GM12878 (cell line): ENCODE measurements at regions of chr9 and their contacts with region 1.

Region 1: DNA sequence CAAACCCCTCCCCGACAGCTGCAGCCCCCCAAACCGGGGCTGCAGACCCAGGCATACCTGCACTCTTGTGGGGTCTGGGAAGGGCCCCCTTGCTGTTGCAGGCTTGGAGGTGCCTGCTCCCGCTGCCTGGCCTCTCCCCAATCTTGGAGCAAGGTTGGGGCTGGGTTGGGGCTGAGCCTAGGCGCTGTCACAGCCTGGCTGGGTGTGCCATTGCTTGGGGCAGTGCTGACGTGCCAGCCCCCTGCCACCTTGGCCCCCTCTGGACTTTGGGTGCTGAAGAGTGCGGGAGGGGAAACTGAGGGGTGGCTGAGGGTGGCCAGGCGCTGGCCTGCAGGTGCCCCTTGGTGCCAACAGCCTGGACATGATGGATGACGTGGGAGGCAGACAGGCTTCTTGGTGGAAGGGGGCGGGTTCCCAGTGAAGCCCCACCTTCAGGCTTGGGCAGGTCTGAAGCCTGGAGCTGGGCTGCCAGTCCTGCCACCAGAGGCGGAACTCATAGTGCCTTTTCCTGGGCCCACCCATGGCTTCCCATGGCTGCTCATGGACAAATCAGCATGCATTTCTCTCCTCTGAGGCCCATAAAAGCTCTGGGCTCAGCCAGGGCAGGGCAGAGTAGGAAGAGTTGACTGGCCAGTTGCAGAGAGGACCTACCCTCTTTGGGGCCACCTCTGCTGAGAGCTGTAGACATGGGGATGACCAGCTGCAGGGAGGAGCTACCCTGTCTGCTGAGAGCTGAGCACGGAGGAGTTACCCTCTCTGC is 19.1 kb downstream of the TMEM38B start:
- DNase-seq: no peak
- ATAC-seq: no peak
- H3K4me3 ChIP-seq: no peak overlapping the region
- H3K27ac ChIP-seq: no peak overlapping the region
- H3K4me1 ChIP-seq: no peaks in the 10 kb centered on the region
- H3K27me3 ChIP-seq: no peaks in the 10 kb centered on the region
- CTCF ChIP-seq: no peak
- EP300 ChIP-seq: no peak
- POLR2A ChIP-seq: no peak
- RAD21 ChIP-seq: no peak

Region 2: DNA sequence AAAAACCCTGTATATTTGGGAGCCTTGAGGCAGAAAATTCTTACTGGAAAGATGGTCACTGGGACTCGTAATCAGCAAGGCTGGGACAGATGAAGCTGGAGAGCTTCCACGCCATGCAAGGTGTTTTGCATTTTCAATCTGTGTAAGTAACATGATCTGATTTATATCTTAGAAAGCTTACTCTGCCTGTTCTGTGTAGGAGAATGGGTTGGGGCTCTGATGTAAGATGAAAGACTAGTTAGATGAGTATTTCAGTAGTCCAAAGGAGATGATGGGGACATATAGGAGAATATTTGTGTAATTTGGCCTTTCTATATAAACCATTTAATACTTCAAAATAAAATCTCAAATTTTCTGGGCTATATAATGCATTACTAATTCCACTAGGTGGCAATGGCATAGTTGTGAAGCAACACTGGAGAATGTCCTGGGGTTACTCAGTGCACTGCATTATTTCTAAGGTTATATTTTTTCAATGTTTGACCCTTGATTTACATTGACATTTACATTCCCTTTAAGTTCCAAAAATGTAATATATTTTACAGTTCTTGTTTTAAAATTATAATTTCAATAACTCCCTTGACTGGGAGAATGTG is 287.5 kb before region 1 on chr9:
- CTCF ChIA-PET with region 1: interaction called, 11 read pairs
- POLR2A ChIA-PET with region 1: no interaction called
- RAD21 ChIA-PET with region 1: interaction called, 4 read pairs
- SMC1A ChIA-PET with region 1: interaction called, 7 read pairs
- in situ Hi-C with region 1: loop called (anchors 5 kb)
- intact Hi-C with region 1: loop called (anchors 2 kb)
- DNase-seq: no peak
- ATAC-seq: peak; percentile 95
- H3K4me3 ChIP-seq: no peak overlapping the region
- H3K27ac ChIP-seq: no peak overlapping the region
- H3K4me1 ChIP-seq: no peaks in the 10 kb centered on the region
- H3K27me3 ChIP-seq: no peaks in the 10 kb centered on the region
- CTCF ChIP-seq: peak; percentile 43 to 63 (median 48); a peak in 4 of 6 replicates
- EP300 ChIP-seq: no peak
- POLR2A ChIP-seq: no peak
- RAD21 ChIP-seq: peak; percentile 78

Region 3: GRCh38 chr9:105921057-105921735 is 207.8 kb after region 1 on chr9:
- CTCF ChIA-PET with region 1: no interaction called
- POLR2A ChIA-PET with region 1: no interaction called
- RAD21 ChIA-PET with region 1: no interaction called
- SMC1A ChIA-PET with region 1: no interaction called
- in situ Hi-C with region 1: no loop called
- intact Hi-C with region 1: no loop called
- DNase-seq: no peak
- ATAC-seq: no peak
- H3K4me3 ChIP-seq: no peak overlapping the region
- H3K27ac ChIP-seq: no peak overlapping the region
- H3K4me1 ChIP-seq: no peaks in the 10 kb centered on the region
- H3K27me3 ChIP-seq: no peaks in the 10 kb centered on the region
- CTCF ChIP-seq: no peak
- EP300 ChIP-seq: no peak
- POLR2A ChIP-seq: no peak
- RAD21 ChIP-seq: no peak